A549 (cell line): ENCODE measurements at regions of chr12 and their contacts with region 1.

Region 1: DNA sequence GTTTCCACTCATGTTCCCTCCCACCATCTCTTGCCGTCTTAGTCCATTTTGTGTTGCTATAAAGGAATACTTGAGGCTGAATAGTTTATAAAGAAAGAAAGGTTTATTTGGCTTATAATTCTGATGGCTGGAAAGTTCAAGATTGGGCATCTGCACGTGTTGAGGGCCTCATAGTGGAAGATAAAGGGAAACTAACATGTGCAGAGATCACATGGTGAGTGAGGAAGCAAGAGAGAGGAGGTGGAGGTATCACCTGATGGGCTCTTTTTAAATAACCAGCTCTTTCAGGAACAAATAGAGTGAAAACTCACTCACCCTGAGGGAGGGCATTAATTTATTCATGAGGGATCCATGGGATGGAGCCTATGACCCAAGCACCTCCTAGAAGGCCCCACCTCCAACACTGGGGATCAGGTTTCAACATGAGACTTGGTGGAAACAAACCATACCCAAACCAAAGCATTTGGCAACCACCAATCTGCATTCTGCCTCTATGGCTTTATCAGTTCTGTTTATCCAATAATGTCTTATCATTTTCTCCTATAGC is 29.5 kb downstream of the MYO1H start:
- DNase-seq: no peak
- ATAC-seq: no peak
- H3K4me3 ChIP-seq: no peak overlapping the region
- H3K27ac ChIP-seq: no peak overlapping the region
- H3K4me1 ChIP-seq: no peaks in the 10 kb centered on the region
- CTCF ChIP-seq: no peak
- EP300 ChIP-seq: no peak
- POLR2A ChIP-seq: no peak
- RAD21 ChIP-seq: no peak

Region 2: DNA sequence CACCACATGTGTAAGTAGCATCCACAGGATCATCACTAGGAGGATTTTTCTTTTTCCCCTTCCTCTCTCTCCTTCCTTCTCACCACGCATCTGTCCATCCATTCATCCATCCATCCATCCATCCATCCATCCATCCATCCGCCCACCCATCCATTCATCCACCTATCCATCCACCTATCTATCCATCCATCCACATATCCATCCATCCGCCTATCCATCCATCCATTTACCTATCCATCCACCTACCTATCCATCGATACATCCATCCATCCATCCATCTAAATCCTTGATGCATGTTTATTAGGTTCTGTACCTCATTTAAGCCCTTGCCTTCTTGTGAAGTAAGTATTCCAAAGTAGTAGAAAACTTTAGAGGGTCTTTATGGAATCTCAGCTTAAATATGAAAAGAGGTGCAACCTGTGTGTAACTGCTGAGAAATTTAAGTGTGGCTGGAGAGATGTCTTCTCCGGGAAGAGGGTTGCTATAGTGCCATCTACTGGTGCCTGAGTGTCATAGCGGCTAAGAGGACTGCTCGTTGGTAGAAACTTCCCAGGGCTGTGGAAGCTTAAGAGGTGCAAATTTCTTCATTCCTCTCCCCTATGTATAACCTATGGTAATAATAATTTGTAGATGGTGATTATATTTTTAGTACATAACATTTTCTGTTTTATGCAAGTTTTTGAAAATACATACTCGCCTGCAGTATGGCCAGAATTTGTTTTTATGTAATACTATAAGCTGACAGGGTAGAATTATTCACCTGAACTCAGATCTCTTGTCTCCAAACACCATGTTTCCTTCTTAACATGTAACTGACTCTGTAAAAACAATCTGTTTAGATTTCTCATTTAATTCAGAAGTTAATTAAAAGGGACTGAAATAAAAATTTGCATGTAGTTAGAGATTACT is 16.5 kb after region 1 on chr12:
- CTCF ChIA-PET with region 1: interaction called, 15 read pairs
- POLR2A ChIA-PET with region 1: no interaction called
- DNase-seq: peak; percentile 76 to 80
- ATAC-seq: peak; percentile 87 to 88
- H3K4me3 ChIP-seq: no peak overlapping the region
- H3K27ac ChIP-seq: no peak overlapping the region
- H3K4me1 ChIP-seq: no peaks in the 10 kb centered on the region
- CTCF ChIP-seq: peak; percentile 84
- EP300 ChIP-seq: no peak
- POLR2A ChIP-seq: no peak
- RAD21 ChIP-seq: peak; percentile 53 to 74

Region 3: DNA sequence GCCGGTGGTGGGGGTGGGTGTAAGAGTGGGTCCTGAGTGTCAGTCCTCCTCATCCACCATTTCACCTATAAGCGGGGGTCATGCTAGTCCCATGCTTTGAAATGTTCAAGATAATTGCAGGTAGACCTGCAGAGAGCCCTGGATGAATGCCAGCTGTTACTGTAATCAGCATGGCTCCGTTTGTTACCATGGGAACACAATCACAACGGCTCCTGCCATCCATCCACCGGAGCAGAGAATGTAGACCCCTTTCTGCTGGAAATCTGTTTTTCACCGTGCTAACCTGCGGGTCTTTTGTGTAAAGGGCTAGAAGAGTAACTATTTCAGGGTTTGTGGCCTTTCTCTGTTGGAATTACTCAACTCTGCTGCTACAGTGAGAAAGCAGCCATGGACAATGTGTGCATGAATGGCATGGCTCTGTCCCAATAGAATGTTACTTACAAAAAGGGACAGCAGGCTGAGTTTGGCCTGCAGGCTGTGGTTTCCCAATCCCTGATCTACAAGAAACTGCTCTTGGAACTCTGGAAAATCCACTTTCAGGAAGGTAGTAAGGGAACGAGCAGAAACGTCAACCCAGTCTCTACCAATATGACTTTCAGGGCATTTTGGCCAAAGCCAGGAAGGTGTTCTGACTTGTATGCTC is 63.8 kb after region 1 on chr12:
- CTCF ChIA-PET with region 1: no interaction called
- POLR2A ChIA-PET with region 1: no interaction called
- DNase-seq: no peak
- ATAC-seq: no peak
- H3K4me3 ChIP-seq: no peak overlapping the region
- H3K27ac ChIP-seq: no peak overlapping the region
- H3K4me1 ChIP-seq: no peaks in the 10 kb centered on the region
- CTCF ChIP-seq: no peak
- EP300 ChIP-seq: no peak
- POLR2A ChIP-seq: no peak
- RAD21 ChIP-seq: no peak

Region 4: GRCh38 chr12:109488051-109488665 is 110.9 kb after region 1 on chr12:
- CTCF ChIA-PET with region 1: no interaction called
- POLR2A ChIA-PET with region 1: no interaction called
- DNase-seq: no peak
- ATAC-seq: no peak
- H3K4me3 ChIP-seq: no peak overlapping the region
- H3K27ac ChIP-seq: no peak overlapping the region
- H3K4me1 ChIP-seq: no peaks in the 10 kb centered on the region
- CTCF ChIP-seq: no peak
- EP300 ChIP-seq: no peak
- POLR2A ChIP-seq: no peak
- RAD21 ChIP-seq: no peak